ENCODE measurements at regions of chr9 and their contacts with region 1.

Region 1: DNA sequence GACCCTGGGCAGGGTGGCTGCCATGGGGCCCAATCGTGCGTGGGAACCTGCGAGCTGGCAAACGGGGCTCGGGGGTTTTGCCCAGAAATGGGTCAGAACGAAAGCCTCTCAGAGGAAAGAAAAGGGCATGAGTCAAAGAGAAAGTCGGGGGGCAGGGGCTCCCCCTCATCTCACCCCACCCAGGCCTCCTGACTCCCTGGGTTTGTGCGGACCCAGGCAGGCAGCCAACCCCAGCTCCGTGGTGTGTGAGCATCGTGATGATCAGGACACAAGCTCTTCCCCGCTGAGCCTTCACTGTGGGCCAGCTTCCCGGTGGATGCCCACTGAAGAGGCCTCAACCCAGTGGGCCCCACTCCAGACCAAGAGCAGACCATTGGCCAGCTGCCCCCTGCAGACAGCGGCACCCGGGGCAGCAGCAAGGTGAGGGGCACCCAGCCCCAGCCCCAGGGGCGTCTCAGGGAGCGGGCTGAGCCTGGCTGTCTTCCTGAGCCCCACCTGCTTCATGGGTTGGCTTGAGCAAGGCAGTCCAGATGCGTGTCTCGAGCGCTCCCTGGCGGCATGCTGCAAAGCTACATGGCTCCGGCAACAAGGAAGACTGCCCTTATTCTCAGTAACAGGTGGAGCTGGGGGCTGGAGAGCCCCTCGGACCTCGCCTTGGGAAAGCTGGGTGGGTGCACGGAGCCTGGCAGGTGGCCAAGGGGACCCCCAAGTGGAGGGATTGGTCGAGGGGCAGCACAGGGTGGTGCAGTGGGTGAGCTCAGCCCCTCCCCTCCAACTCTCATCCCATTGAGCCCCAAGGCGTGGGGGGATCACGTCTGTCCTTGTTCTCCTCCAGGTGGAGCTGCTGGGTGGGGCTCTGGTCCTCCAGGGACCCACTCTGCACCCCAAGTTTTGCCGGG is 3.2 kb upstream of the FUT7 start:
- DNase-seq: peak; percentile 74 to 94 (median 90)
- ATAC-seq: peak; percentile 89
- H3K4me3 ChIP-seq: peak overlapping the region; percentile 31 to 48
- H3K4me3 Mint-ChIP-seq: peak overlapping the region; percentile 70
- H3K27ac ChIP-seq: peak overlapping the region in 1 of 2 experiments; percentile 66
- H3K27ac Mint-ChIP-seq: peak overlapping the region; percentile 83
- H3K4me1 ChIP-seq: peaks cover 46% of the 10 kb centered on the region
- H3K4me1 Mint-ChIP-seq: peaks cover 34% of the 10 kb centered on the region
- H3K27me3 ChIP-seq: no peaks in the 10 kb centered on the region
- H3K27me3 Mint-ChIP-seq: no peaks in the 10 kb centered on the region
- CTCF ChIP-seq: peak; percentile 90

Region 2: DNA sequence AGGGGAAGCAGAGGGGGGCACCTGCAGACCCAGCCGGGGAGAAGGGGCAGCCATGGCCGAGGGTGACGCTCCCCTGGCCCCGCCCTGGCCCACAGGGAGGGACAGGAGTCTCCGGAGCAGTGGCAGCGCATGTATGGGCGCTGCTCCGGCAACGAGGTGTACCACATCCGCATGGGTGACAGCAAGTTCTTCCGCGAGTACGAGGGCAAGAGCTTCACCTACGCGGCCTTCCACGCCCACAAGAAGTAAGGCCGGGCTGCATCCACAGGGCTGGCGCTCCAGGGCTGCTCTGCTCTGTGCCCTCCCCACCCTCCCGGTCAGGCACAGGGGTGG is 1264.9 kb before region 1 on chr9:
- CTCF ChIA-PET with region 1: no interaction called
- POLR2A ChIA-PET with region 1: no interaction called
- intact Hi-C with region 1: no loop called
- DNase-seq: peak in 2 of 9 experiments; percentile 24 to 28
- ATAC-seq: no peak
- H3K4me3 ChIP-seq: no peak overlapping the region
- H3K4me3 Mint-ChIP-seq: no peak overlapping the region
- H3K27ac ChIP-seq: no peak overlapping the region
- H3K27ac Mint-ChIP-seq: no peak overlapping the region
- H3K4me1 ChIP-seq: no peaks in the 10 kb centered on the region
- H3K4me1 Mint-ChIP-seq: no peaks in the 10 kb centered on the region
- H3K27me3 ChIP-seq: peaks cover 0 to 5% of the 10 kb centered on the region in 2 experiments
- H3K27me3 Mint-ChIP-seq: no peaks in the 10 kb centered on the region
- CTCF ChIP-seq: no peak

Region 3: GRCh38 chr9:136944519-136945279 is 90.4 kb before region 1 on chr9 and contains the starts of genes C8G and FBXW5:
- CTCF ChIA-PET with region 1: interaction called, 68 read pairs
- POLR2A ChIA-PET with region 1: interaction called, 7 read pairs
- intact Hi-C with region 1: loop called (anchors 1 kb)
- DNase-seq: peak; percentile 87 to 98 (median 93)
- ATAC-seq: peak; percentile 87
- H3K4me3 ChIP-seq: peak within 1 kb of the TSS; percentile 63 to 79
- H3K4me3 Mint-ChIP-seq: peak within 1 kb of the TSS; percentile 82
- H3K27ac ChIP-seq: peak within 1 kb of the TSS; percentile 28 to 48
- H3K27ac Mint-ChIP-seq: peak within 1 kb of the TSS; percentile 62
- H3K4me1 ChIP-seq: peaks cover 16% of the 10 kb centered on the region
- H3K4me1 Mint-ChIP-seq: peaks cover 12% of the 10 kb centered on the region
- H3K27me3 ChIP-seq: no peaks in the 10 kb centered on the region
- H3K27me3 Mint-ChIP-seq: no peaks in the 10 kb centered on the region
- CTCF ChIP-seq: peak; percentile 96
- total RNA-seq, gene C8G: not detected
- total RNA-seq, gene FBXW5: 38.4 to 39.5 TPM

Region 4: DNA sequence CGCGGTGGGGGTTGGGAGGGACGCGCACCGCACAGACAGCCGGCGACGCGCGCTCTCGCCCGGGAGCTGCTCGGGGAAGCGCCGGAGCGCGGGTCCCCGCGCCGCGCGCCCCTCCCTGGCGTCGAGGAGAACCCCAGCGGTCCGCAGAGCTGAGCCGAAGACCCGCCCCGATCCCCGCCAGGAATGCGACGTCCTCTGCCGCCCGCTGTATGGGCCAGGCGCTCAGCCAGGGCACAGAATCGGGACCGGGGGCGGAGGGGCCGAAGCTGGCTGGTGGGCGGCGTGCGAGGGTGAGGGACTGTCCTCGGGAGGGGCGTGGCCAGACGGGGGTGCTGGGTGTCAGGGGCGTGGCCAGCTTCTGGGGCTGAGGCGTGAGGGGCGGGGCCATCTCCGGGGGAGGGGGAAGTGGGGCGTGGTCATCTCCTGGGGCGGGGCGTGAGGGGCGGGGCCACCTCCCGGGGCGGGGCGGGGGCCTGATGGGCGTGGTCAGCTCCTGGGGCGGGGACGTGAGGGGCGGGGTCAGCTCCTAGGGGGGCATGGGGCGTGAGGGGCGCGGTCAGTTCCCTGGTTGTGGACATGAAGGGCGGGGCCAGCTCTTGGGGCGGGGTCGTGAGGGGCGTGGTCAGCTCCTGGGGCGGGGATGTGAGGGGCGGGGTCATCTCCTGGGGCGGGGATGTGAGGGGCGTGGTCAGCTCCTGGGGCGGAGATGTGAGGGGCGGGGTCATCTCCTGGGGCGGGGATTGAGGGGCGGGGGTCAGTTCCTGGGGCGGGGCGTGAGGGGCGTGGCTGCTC is 56.8 kb before region 1 on chr9:
- CTCF ChIA-PET with region 1: interaction called, 14 read pairs
- POLR2A ChIA-PET with region 1: no interaction called
- intact Hi-C with region 1: no loop called
- DNase-seq: peak; percentile 47 to 87 (median 73)
- ATAC-seq: peak; percentile 81
- H3K4me3 ChIP-seq: peak overlapping the region; percentile 26 to 55
- H3K4me3 Mint-ChIP-seq: peak overlapping the region; percentile 51
- H3K27ac ChIP-seq: no peak overlapping the region
- H3K27ac Mint-ChIP-seq: no peak overlapping the region
- H3K4me1 ChIP-seq: peaks cover 37% of the 10 kb centered on the region
- H3K4me1 Mint-ChIP-seq: peaks cover 21% of the 10 kb centered on the region
- H3K27me3 ChIP-seq: no peaks in the 10 kb centered on the region
- H3K27me3 Mint-ChIP-seq: no peaks in the 10 kb centered on the region
- CTCF ChIP-seq: no peak

Region 5: DNA sequence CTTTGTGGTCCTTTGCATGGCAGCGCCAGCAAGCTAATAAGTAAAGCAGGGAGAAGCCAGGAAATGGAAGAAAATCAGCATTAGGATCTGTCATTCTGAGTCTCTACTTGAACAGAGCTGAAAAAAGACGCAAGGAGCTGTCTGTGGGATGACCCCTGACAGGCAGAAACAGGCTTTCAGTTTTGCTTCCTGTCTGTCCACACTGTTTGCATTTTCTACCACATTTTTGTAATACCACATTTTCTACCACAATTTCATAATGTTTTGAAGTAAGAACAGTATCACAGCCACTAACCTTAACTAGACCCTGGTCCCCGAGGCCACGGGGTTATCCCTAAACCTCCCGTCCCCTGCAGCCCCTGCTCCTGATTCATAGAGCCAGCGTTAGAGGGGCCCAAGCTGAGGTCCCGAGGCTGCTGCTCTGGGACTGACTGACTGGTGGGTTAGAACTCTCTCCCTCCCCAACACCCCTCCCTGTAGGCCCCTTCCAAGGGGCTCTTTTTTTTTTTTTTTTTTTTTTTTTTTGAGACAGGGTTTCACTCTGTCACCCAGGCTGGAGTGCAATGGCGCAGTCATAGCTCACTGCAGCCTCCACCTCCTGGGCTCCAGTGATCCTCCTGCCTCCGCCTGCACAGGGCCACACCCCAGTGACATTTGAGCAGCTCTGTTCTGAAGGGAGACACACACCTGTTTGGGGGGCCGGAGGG is 34.8 kb before region 1 on chr9:
- CTCF ChIA-PET with region 1: interaction called, 30 read pairs
- POLR2A ChIA-PET with region 1: interaction called, 8 read pairs
- intact Hi-C with region 1: loop called (anchors 1 to 2 kb)
- DNase-seq: peak in 2 of 9 experiments; percentile 65 to 80
- ATAC-seq: peak; percentile 32
- H3K4me3 ChIP-seq: peak overlapping the region in 1 of 2 experiments; percentile 18
- H3K4me3 Mint-ChIP-seq: peak overlapping the region; percentile 69
- H3K27ac ChIP-seq: peak overlapping the region; percentile 9 to 65
- H3K27ac Mint-ChIP-seq: peak overlapping the region; percentile 69
- H3K4me1 ChIP-seq: peaks cover 40% of the 10 kb centered on the region
- H3K4me1 Mint-ChIP-seq: peaks cover 39% of the 10 kb centered on the region
- H3K27me3 ChIP-seq: no peaks in the 10 kb centered on the region
- H3K27me3 Mint-ChIP-seq: no peaks in the 10 kb centered on the region
- CTCF ChIP-seq: no peak

Region 6: GRCh38 chr9:137046098-137046787 is 11.1 kb after region 1 on chr9 and contains the start of gene NPDC1:
- CTCF ChIA-PET with region 1: interaction called, 37 read pairs
- POLR2A ChIA-PET with region 1: interaction called, 5 read pairs
- intact Hi-C with region 1: no loop called
- DNase-seq: peak; percentile 64 to 87 (median 80)
- ATAC-seq: peak; percentile 87
- H3K4me3 ChIP-seq: peak within 1 kb of the TSS; percentile 28 to 45
- H3K4me3 Mint-ChIP-seq: peak within 1 kb of the TSS; percentile 68
- H3K27ac ChIP-seq: no peak within 1 kb of the TSS
- H3K27ac Mint-ChIP-seq: no peak within 1 kb of the TSS
- H3K4me1 ChIP-seq: peaks cover 29% of the 10 kb centered on the region
- H3K4me1 Mint-ChIP-seq: peaks cover 16% of the 10 kb centered on the region
- H3K27me3 ChIP-seq: peaks cover 44 to 67% of the 10 kb centered on the region in 2 experiments
- H3K27me3 Mint-ChIP-seq: peaks cover 26% of the 10 kb centered on the region
- CTCF ChIP-seq: peak; percentile 84
- total RNA-seq, gene NPDC1: 29.7 to 29.8 TPM

Region 7: DNA sequence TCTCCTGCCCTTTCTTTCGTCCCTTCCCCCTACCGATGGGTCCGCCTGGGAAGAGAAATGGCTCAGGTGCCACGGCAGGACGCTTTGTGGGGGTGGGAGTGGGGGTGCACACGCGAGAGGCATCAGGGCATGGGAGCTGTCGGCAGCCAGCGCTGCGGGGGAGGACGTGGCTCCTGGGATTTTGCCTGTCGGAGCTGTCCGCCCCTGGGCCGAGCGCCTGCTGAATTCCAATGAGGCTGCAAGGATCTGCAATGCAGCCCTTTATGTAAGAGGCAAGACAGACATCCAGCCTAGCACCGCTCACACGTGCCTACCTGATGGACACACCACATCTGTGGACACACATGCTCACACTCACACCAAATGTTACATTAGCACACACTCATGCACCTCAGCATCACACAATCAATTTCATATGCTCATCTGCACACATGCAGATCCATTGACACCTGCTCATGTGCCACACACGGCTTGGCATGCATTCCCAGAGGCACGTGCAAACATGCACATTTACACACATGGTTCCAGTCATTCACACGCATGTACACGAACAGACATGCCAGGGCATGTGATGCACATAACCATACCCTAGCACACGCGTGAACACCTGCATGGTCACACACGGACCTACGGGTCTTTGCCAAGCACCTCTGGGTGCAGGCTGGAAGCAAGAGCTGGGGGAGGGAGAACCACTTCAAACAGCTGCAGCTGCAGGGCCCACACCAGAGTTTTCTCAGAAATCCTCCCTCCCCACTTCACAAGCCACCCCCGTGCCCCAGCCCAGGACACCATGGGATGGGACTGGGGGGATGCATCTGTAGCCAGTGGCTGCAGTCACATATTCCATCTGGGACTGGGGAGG is 105.3 kb after region 1 on chr9:
- CTCF ChIA-PET with region 1: no interaction called
- POLR2A ChIA-PET with region 1: no interaction called
- intact Hi-C with region 1: no loop called
- DNase-seq: no peak
- ATAC-seq: no peak
- H3K4me3 ChIP-seq: no peak overlapping the region
- H3K4me3 Mint-ChIP-seq: no peak overlapping the region
- H3K27ac ChIP-seq: no peak overlapping the region
- H3K27ac Mint-ChIP-seq: no peak overlapping the region
- H3K4me1 ChIP-seq: no peaks in the 10 kb centered on the region
- H3K4me1 Mint-ChIP-seq: peaks cover 3% of the 10 kb centered on the region
- H3K27me3 ChIP-seq: peaks cover 43 to 51% of the 10 kb centered on the region in 2 experiments
- H3K27me3 Mint-ChIP-seq: peaks cover 57% of the 10 kb centered on the region
- CTCF ChIP-seq: no peak